Naive thymus-derived CD4-positive, alpha-beta T cell (primary cell): ENCODE measurements at regions of chr15 and their contacts with region 1.

Region 1: GRCh38 chr15:75023181-75023871 is at the start of gene PPCDC:
- DNase-seq: peak; percentile 79 to 94 (median 91)
- ATAC-seq: peak; percentile 100
- H3K4me3 ChIP-seq: peak within 1 kb of the TSS; percentile 84
- H3K4me3 Mint-ChIP-seq: peak within 1 kb of the TSS; percentile 81 to 99 (median 97)
- H3K27ac ChIP-seq: peak within 1 kb of the TSS; percentile 84
- H3K27ac Mint-ChIP-seq: peak within 1 kb of the TSS; percentile 87 to 98 (median 93)
- H3K4me1 ChIP-seq: no peaks in the 10 kb centered on the region
- H3K4me1 Mint-ChIP-seq: peaks cover 11 to 30% (median 26%) of the 10 kb centered on the region in 7 donors
- H3K27me3 ChIP-seq: no peaks in the 10 kb centered on the region
- H3K27me3 Mint-ChIP-seq: no peaks in the 10 kb centered on the region
- total RNA-seq, gene PPCDC: 11.7 to 31.3 (median 17.1) TPM

Region 2: GRCh38 chr15:73991726-73992593 is 1031.4 kb before region 1 on chr15 and contains the start of gene STOML1:
- CTCF ChIA-PET with region 1: no interaction called
- POLR2A ChIA-PET with region 1: no interaction called
- intact Hi-C with region 1: loop called in 1 of 2 experiments (anchors 2 kb)
- DNase-seq: peak; percentile 85 to 99 (median 91)
- ATAC-seq: peak; percentile 91
- H3K4me3 ChIP-seq: peak within 1 kb of the TSS; percentile 68
- H3K4me3 Mint-ChIP-seq: peak within 1 kb of the TSS; percentile 82 to 100 (median 98)
- H3K27ac ChIP-seq: peak within 1 kb of the TSS; percentile 90
- H3K27ac Mint-ChIP-seq: peak within 1 kb of the TSS; percentile 72 to 99 (median 87)
- H3K4me1 ChIP-seq: peaks cover 33 to 35% of the 10 kb centered on the region in 2 donors
- H3K4me1 Mint-ChIP-seq: peaks cover 28 to 62% (median 49%) of the 10 kb centered on the region in 7 donors
- H3K27me3 ChIP-seq: no peaks in the 10 kb centered on the region
- H3K27me3 Mint-ChIP-seq: no peaks in the 10 kb centered on the region
- total RNA-seq, gene STOML1: 7.5 to 14.5 (median 12.3) TPM

Region 3: DNA sequence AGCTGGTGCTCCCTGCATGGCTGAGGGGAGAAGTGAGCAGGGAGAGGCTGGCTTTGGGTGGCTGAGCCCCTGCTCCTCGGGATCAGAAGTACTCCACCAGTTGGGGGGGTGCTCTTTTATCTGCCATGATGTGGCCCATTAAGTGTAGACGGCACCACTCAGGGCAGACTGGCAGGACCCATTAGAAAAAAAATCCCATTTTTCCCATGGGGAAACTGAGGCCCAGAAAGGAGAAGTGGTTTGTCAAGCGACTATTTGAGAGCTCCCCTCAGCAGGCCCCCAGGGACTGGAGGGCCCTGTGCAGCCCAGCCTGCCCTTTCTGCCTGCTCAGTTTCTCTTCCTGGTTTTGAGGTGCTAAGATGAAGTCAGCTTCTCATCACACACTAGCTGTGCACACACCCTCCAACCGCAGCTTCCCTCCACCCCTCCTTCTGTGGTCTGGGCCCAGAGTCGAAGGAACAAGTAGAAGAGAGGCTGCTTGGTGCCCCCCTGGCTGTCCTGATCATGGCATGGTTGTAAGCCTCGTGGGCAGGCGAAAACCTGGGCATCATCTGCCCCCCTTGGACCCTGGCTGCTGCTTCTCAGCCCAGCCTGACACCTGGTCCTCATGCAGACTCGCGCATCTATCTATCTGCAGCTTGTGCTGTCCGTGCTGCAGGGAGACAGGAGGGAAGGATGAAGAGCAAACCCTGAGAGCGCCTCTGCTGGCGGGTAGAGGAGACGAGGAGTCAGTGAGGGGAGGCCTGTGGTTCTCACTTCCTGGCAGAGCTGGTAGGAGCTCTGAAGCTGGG is 235.9 kb before region 1 on chr15:
- CTCF ChIA-PET with region 1: no interaction called
- POLR2A ChIA-PET with region 1: no interaction called
- intact Hi-C with region 1: loop called in 1 of 2 experiments (anchors 1 kb)
- DNase-seq: peak; percentile 69 to 97 (median 96)
- ATAC-seq: peak; percentile 85
- H3K4me3 ChIP-seq: peak overlapping the region; percentile 85
- H3K4me3 Mint-ChIP-seq: peak overlapping the region; percentile 87 to 97 (median 93)
- H3K27ac ChIP-seq: peak overlapping the region; percentile 92
- H3K27ac Mint-ChIP-seq: peak overlapping the region; percentile 95 to 99 (median 98)
- H3K4me1 ChIP-seq: peaks cover 66 to 72% of the 10 kb centered on the region in 2 donors
- H3K4me1 Mint-ChIP-seq: peaks cover 57 to 78% (median 75%) of the 10 kb centered on the region in 7 donors
- H3K27me3 ChIP-seq: no peaks in the 10 kb centered on the region
- H3K27me3 Mint-ChIP-seq: no peaks in the 10 kb centered on the region

Region 4: DNA sequence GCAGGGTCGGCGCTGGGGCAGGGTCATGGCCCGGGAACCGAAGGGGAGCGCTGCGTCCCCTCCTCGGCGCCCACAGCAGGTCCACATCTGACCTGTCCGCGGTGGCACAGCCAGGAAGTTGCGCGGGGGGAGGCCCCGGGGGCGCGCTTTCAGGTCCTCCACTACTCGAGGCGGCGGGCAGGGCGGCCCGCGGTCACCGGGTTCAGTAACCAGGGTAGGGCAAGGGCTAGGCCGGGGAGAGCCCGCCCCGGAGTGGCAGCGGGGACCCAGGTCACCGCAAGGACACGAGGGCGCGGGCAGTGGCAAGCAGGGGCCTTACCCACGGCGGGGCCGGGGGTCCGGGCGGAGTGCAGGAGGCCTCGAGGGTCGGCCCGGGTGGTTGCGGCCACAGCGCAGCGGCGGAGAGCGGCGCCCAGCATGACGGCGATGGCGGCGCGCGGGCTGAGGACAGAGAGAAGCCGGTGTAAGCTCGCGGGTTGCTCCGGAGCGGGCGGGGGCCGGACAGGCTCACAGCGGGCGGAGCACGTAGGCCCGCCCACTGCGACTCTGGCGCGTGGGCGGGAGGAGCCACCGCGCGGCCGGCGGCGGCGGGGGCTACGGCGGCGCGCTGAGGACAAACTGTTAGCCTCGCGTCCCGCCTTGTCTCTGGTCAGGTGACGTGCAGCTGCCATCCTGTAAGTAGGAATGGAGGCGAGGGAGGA is 85.6 kb before region 1 on chr15 and contains the start of gene COX5A:
- CTCF ChIA-PET with region 1: no interaction called
- POLR2A ChIA-PET with region 1: no interaction called
- intact Hi-C with region 1: loop called in 1 of 2 experiments (anchors 1 kb)
- DNase-seq: peak; percentile 86 to 94 (median 92)
- ATAC-seq: peak; percentile 99
- H3K4me3 ChIP-seq: peak within 1 kb of the TSS; percentile 62
- H3K4me3 Mint-ChIP-seq: peak within 1 kb of the TSS; percentile 87 to 97 (median 94)
- H3K27ac ChIP-seq: peak within 1 kb of the TSS; percentile 85
- H3K27ac Mint-ChIP-seq: peak within 1 kb of the TSS; percentile 85 to 95 (median 91)
- H3K4me1 ChIP-seq: peaks cover 0 to 17% of the 10 kb centered on the region in 2 donors
- H3K4me1 Mint-ChIP-seq: peaks cover 16 to 38% (median 26%) of the 10 kb centered on the region in 7 donors
- H3K27me3 ChIP-seq: no peaks in the 10 kb centered on the region
- H3K27me3 Mint-ChIP-seq: peaks cover 0 to 3% (median 0%) of the 10 kb centered on the region in 5 donors
- total RNA-seq, gene COX5A: 44.4 to 210 (median 59.2) TPM

Region 5: DNA sequence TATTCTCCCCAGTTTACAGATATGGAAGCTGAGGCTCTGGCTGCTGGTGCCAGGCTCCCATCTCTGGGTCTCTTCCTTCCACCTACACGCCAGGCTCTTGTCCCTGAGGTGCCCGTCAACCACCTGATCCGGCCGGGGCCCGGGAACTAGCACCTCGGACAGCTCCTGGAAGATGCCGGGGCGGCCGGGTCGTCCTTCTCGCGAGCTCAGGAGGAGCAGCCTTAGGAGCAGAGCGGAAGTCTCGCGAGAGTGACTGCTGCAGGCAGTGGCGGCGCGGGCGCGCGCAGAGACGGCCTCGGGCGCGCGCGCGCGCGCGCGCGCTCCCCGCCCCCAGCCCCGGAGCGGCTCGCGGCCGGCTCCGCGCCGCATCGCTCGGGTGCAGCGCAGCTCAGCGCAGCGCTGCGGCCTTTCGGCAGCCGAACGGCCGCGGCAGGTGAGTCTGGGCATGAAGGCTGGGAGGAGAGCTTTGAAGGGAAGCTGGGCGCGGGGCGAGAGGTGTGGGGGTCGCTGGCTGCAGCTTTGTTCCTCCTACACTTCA is 28.0 kb before region 1 on chr15 and contains the start of gene SCAMP5:
- CTCF ChIA-PET with region 1: no interaction called
- POLR2A ChIA-PET with region 1: interaction called, 3 read pairs
- intact Hi-C with region 1: loop called (anchors 1 kb)
- DNase-seq: peak; percentile 81 to 95 (median 91)
- ATAC-seq: peak; percentile 99
- H3K4me3 ChIP-seq: peak within 1 kb of the TSS; percentile 75
- H3K4me3 Mint-ChIP-seq: peak within 1 kb of the TSS; percentile 73 to 97 (median 82)
- H3K27ac ChIP-seq: no peak within 1 kb of the TSS
- H3K27ac Mint-ChIP-seq: peak within 1 kb of the TSS in 4 of 9 donors; percentile 10 to 75 (median 26)
- H3K4me1 ChIP-seq: peaks cover 8 to 9% of the 10 kb centered on the region in 2 donors
- H3K4me1 Mint-ChIP-seq: peaks cover 8 to 20% (median 15%) of the 10 kb centered on the region in 7 donors
- H3K27me3 ChIP-seq: no peaks in the 10 kb centered on the region
- H3K27me3 Mint-ChIP-seq: peaks cover 10 to 37% (median 27%) of the 10 kb centered on the region in 5 donors
- total RNA-seq, gene SCAMP5: 0.35 to 9.5 (median 0.87) TPM

Region 6: DNA sequence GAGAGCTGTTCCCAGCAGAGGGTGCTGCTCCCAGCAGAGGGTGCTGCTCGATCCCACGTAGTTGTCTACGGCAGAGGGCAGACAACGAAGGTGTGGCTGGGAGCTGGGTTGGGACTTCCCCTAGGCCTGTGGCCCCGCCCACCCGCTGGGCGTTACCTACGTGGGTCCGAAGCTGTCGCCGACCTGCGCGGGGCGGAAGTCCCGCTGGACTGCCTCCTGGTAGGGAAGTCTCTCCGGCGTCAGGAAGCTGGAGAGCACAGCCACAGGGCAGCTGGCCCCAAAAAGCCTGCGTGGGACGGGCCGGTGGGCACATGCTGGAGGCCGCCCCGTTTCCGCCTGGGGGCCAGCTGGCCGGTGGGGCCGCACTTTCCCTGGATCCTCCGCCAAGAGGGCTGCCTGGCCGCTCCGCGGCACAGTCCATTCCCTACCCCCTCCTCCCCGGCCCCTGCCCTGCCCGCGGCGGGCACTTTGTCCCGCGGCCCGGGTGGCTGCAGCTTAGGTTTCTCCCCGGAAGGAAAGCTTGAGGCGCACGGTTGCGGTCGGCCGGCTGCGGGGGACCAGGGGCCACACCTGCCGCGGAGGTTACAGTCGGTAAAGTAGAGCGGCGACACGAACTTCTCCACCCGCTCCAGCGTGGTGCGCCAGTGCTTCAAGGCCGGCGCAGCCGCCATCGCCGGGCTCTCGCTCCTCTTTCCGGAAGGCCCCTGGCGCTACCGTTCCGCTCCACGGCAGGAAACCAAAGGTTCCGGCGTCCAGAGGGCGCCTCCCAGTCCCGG is 344.8 kb after region 1 on chr15 and contains the start of gene MAN2C1:
- CTCF ChIA-PET with region 1: no interaction called
- POLR2A ChIA-PET with region 1: interaction called, 10 read pairs
- intact Hi-C with region 1: loop called in 1 of 2 experiments (anchors 2 kb)
- DNase-seq: peak; percentile 80 to 96 (median 87)
- ATAC-seq: peak; percentile 98
- H3K4me3 ChIP-seq: peak within 1 kb of the TSS; percentile 75
- H3K4me3 Mint-ChIP-seq: peak within 1 kb of the TSS; percentile 88 to 94 (median 92)
- H3K27ac ChIP-seq: peak within 1 kb of the TSS; percentile 93
- H3K27ac Mint-ChIP-seq: peak within 1 kb of the TSS; percentile 90 to 97 (median 94)
- H3K4me1 ChIP-seq: peaks cover 11 to 15% of the 10 kb centered on the region in 2 donors
- H3K4me1 Mint-ChIP-seq: peaks cover 8 to 28% (median 24%) of the 10 kb centered on the region in 7 donors
- H3K27me3 ChIP-seq: no peaks in the 10 kb centered on the region
- H3K27me3 Mint-ChIP-seq: no peaks in the 10 kb centered on the region
- total RNA-seq, gene MAN2C1: 298 to 557 (median 451) TPM